ENCODE measurements at regions of chr15 and their contacts with region 1.

Region 1: DNA sequence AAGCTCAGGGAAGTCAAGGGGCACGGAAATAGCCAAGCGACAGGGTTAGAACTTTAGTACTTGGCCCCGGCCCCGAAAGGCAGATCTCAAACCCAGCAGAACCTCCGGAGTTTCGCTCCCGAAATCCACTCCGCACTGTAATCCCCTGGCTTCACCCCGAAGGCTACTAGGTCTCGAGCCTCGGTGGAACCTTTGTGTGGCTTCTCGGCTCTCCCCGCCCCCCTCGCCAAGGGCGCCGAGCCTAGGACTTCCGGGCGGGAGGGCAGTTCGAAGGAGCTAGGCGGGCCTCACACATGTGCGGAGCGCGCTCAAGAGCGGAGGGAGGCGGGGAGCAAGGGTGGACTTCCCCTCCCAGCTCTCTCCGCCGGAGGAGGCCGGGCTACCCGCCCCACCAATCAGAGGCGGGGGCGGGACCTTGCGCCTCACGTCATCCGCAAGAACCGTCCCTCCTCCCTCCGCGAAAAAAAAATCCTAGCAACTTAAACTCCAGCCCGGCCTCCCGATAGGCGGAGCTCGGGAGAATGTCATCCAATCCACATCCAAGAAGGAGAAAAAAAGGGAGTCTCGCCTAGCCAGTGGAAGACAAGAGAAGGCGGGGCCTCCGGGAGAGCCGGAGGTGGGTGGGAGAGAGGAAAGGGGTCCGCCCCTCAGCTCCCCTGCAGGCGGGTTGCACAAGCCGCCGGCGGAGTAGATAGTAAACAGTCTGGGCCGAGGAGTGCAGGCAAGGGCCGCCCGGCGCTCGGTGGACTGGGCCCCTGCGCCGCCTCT is 2.4 kb upstream of the SIN3A start:
- DNase-seq: peak; percentile 93 to 100 (median 95)
- ATAC-seq: peak; percentile 39
- H3K4me3 ChIP-seq: peak overlapping the region; percentile 86 to 96
- H3K4me3 Mint-ChIP-seq: peak overlapping the region; percentile 92
- H3K27ac ChIP-seq: peak overlapping the region; percentile 83 to 92
- H3K27ac Mint-ChIP-seq: peak overlapping the region; percentile 99
- H3K4me1 ChIP-seq: peaks cover 23% of the 10 kb centered on the region
- H3K4me1 Mint-ChIP-seq: peaks cover 37% of the 10 kb centered on the region
- H3K27me3 ChIP-seq: no peaks in the 10 kb centered on the region
- H3K27me3 Mint-ChIP-seq: no peaks in the 10 kb centered on the region
- CTCF ChIP-seq: no peak

Region 2: DNA sequence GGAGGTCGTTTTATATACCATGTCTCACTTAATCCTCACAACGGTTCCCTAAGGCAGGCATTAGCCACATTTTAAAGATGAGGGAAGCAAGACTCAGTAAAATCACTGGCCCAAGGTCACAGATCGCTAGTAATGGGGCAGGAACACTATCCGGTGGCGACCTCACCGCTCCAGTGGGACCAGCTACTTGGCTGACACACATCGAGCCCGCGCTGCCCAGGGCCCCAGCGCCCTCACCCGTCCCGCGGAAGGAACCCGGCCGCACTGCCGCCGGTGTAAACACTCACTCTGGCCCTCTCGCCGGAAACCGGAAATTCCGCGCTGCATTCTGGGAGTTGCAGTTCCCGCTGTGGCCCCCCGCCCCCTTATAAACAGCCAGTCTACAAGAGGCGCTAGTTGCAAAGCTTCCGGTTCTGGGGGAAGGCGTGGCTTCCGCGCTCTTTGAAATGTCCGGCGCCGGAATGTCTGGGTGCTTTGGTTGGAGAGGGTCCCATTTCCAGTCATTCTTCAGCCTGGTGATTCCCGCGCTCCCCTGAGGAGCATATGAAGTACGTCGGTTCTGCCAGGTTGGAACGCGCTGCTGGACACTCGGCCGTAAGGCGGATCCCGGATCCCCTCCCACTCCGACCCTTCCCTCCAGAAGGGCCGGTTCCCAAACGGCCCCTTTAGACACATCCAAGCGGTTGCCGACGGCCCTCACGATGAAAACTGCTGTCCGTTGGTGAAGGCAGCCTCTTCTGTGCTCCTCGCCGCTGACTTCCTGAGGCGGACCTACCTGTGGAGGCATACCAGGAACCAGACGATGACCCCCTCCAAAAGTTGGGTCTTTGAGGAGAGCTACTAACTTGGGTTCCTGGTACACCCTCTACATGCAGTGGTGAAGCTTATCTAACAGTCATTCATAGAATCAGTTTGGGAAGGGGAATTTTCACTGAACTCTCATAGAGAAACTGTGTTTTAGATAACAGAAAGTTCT is 992.7 kb before region 1 on chr15 and contains the start of gene UBL7:
- CTCF ChIA-PET with region 1: no interaction called
- POLR2A ChIA-PET with region 1: no interaction called
- intact Hi-C with region 1: loop called in 1 of 2 experiments (anchors 5 kb)
- DNase-seq: peak; percentile 93 to 99 (median 96)
- ATAC-seq: peak; percentile 98
- H3K4me3 ChIP-seq: peak within 1 kb of the TSS; percentile 74 to 85
- H3K4me3 Mint-ChIP-seq: peak within 1 kb of the TSS; percentile 93
- H3K27ac ChIP-seq: peak within 1 kb of the TSS; percentile 53 to 83
- H3K27ac Mint-ChIP-seq: peak within 1 kb of the TSS; percentile 94
- H3K4me1 ChIP-seq: peaks cover 21% of the 10 kb centered on the region
- H3K4me1 Mint-ChIP-seq: peaks cover 50% of the 10 kb centered on the region
- H3K27me3 ChIP-seq: no peaks in the 10 kb centered on the region
- H3K27me3 Mint-ChIP-seq: no peaks in the 10 kb centered on the region
- CTCF ChIP-seq: no peak
- total RNA-seq, gene UBL7: 21.7 to 23.1 TPM

Region 3: GRCh38 chr15:74653426-74654123 is 800.3 kb before region 1 on chr15:
- CTCF ChIA-PET with region 1: no interaction called
- POLR2A ChIA-PET with region 1: no interaction called
- intact Hi-C with region 1: no loop called
- DNase-seq: no peak
- ATAC-seq: no peak
- H3K4me3 ChIP-seq: no peak overlapping the region
- H3K4me3 Mint-ChIP-seq: no peak overlapping the region
- H3K27ac ChIP-seq: no peak overlapping the region
- H3K27ac Mint-ChIP-seq: no peak overlapping the region
- H3K4me1 ChIP-seq: no peaks in the 10 kb centered on the region
- H3K4me1 Mint-ChIP-seq: peaks cover 26% of the 10 kb centered on the region
- H3K27me3 ChIP-seq: no peaks in the 10 kb centered on the region
- H3K27me3 Mint-ChIP-seq: no peaks in the 10 kb centered on the region
- CTCF ChIP-seq: no peak

Region 4: GRCh38 chr15:74842581-74843444 is 611.1 kb before region 1 on chr15 and contains the start of gene ULK3:
- CTCF ChIA-PET with region 1: no interaction called
- POLR2A ChIA-PET with region 1: no interaction called
- intact Hi-C with region 1: loop called (anchors 2 kb)
- DNase-seq: peak; percentile 88 to 96 (median 92)
- ATAC-seq: peak; percentile 92
- H3K4me3 ChIP-seq: peak within 1 kb of the TSS; percentile 90 to 97
- H3K4me3 Mint-ChIP-seq: peak within 1 kb of the TSS; percentile 91
- H3K27ac ChIP-seq: peak within 1 kb of the TSS; percentile 72 to 78
- H3K27ac Mint-ChIP-seq: peak within 1 kb of the TSS; percentile 93
- H3K4me1 ChIP-seq: peaks cover 43% of the 10 kb centered on the region
- H3K4me1 Mint-ChIP-seq: peaks cover 48% of the 10 kb centered on the region
- H3K27me3 ChIP-seq: no peaks in the 10 kb centered on the region
- H3K27me3 Mint-ChIP-seq: no peaks in the 10 kb centered on the region
- CTCF ChIP-seq: peak; percentile 71
- total RNA-seq, gene ULK3: 34.3 to 35.1 TPM

Region 5: DNA sequence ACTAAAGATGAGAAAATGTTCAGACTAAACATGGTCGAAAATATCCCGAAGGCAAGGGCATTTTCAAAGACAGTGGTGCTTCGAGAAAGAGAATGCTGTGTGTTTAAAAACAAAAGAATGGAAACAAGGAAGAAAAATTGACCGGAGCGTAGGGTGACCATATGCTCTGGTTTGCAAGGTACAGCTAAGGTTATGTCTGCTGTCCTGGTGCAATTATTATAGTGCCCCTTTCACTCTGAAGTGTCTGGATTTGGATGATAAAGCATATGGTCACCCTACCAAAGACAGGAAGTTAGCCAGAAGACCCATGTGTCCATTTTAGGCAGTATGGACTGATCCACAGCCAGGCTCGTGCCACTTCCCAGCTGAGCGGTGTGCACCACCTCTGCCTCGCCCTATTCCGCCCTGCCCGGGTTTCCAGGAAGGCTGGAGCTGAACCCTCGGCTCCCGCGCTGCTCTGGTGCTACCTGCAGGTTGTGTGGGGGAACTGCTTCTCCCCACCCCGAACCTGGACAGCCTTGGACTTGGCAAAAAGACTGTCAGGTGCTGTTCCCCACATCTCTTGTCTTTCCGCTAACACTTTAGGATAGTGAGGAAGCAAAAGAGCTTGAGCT is 146.0 kb before region 1 on chr15:
- CTCF ChIA-PET with region 1: no interaction called
- POLR2A ChIA-PET with region 1: no interaction called
- intact Hi-C with region 1: no loop called
- DNase-seq: no peak
- ATAC-seq: no peak
- H3K4me3 ChIP-seq: no peak overlapping the region
- H3K4me3 Mint-ChIP-seq: no peak overlapping the region
- H3K27ac ChIP-seq: no peak overlapping the region
- H3K27ac Mint-ChIP-seq: no peak overlapping the region
- H3K4me1 ChIP-seq: no peaks in the 10 kb centered on the region
- H3K4me1 Mint-ChIP-seq: no peaks in the 10 kb centered on the region
- H3K27me3 ChIP-seq: no peaks in the 10 kb centered on the region
- H3K27me3 Mint-ChIP-seq: peaks cover 17% of the 10 kb centered on the region
- CTCF ChIP-seq: peak; percentile 14

Region 6: GRCh38 chr15:75367913-75368688 is 85.8 kb before region 1 on chr15 and contains the start of gene MAN2C1:
- CTCF ChIA-PET with region 1: interaction called, 20 read pairs
- POLR2A ChIA-PET with region 1: interaction called, 76 read pairs
- intact Hi-C with region 1: loop called (anchors 1 kb)
- DNase-seq: peak; percentile 76 to 97 (median 91)
- ATAC-seq: peak; percentile 97
- H3K4me3 ChIP-seq: peak within 1 kb of the TSS; percentile 86 to 97
- H3K4me3 Mint-ChIP-seq: peak within 1 kb of the TSS; percentile 91
- H3K27ac ChIP-seq: peak within 1 kb of the TSS; percentile 89 to 96
- H3K27ac Mint-ChIP-seq: peak within 1 kb of the TSS; percentile 94
- H3K4me1 ChIP-seq: peaks cover 15% of the 10 kb centered on the region
- H3K4me1 Mint-ChIP-seq: peaks cover 24% of the 10 kb centered on the region
- H3K27me3 ChIP-seq: no peaks in the 10 kb centered on the region
- H3K27me3 Mint-ChIP-seq: no peaks in the 10 kb centered on the region
- CTCF ChIP-seq: no peak
- total RNA-seq, gene MAN2C1: 342 to 373 TPM

Region 7: GRCh38 chr15:75389791-75390382 is 64.0 kb before region 1 on chr15:
- CTCF ChIA-PET with region 1: no interaction called
- POLR2A ChIA-PET with region 1: no interaction called
- intact Hi-C with region 1: no loop called
- DNase-seq: no peak
- ATAC-seq: no peak
- H3K4me3 ChIP-seq: no peak overlapping the region
- H3K4me3 Mint-ChIP-seq: no peak overlapping the region
- H3K27ac ChIP-seq: no peak overlapping the region
- H3K27ac Mint-ChIP-seq: no peak overlapping the region
- H3K4me1 ChIP-seq: no peaks in the 10 kb centered on the region
- H3K4me1 Mint-ChIP-seq: peaks cover 14% of the 10 kb centered on the region
- H3K27me3 ChIP-seq: no peaks in the 10 kb centered on the region
- H3K27me3 Mint-ChIP-seq: no peaks in the 10 kb centered on the region
- CTCF ChIP-seq: no peak

Region 8: GRCh38 chr15:75639709-75640482 is 186.0 kb after region 1 on chr15 and contains the start of gene IMP3:
- CTCF ChIA-PET with region 1: interaction called, 13 read pairs
- POLR2A ChIA-PET with region 1: interaction called, 140 read pairs
- intact Hi-C with region 1: loop called (anchors 1 kb)
- DNase-seq: peak; percentile 81 to 98 (median 94)
- ATAC-seq: peak; percentile 90
- H3K4me3 ChIP-seq: peak within 1 kb of the TSS; percentile 80 to 99
- H3K4me3 Mint-ChIP-seq: peak within 1 kb of the TSS; percentile 91
- H3K27ac ChIP-seq: peak within 1 kb of the TSS; percentile 79 to 98
- H3K27ac Mint-ChIP-seq: peak within 1 kb of the TSS; percentile 97
- H3K4me1 ChIP-seq: peaks cover 31% of the 10 kb centered on the region
- H3K4me1 Mint-ChIP-seq: peaks cover 41% of the 10 kb centered on the region
- H3K27me3 ChIP-seq: no peaks in the 10 kb centered on the region
- H3K27me3 Mint-ChIP-seq: no peaks in the 10 kb centered on the region
- CTCF ChIP-seq: no peak
- total RNA-seq, gene IMP3: 67.1 to 69.5 TPM

Region 9: DNA sequence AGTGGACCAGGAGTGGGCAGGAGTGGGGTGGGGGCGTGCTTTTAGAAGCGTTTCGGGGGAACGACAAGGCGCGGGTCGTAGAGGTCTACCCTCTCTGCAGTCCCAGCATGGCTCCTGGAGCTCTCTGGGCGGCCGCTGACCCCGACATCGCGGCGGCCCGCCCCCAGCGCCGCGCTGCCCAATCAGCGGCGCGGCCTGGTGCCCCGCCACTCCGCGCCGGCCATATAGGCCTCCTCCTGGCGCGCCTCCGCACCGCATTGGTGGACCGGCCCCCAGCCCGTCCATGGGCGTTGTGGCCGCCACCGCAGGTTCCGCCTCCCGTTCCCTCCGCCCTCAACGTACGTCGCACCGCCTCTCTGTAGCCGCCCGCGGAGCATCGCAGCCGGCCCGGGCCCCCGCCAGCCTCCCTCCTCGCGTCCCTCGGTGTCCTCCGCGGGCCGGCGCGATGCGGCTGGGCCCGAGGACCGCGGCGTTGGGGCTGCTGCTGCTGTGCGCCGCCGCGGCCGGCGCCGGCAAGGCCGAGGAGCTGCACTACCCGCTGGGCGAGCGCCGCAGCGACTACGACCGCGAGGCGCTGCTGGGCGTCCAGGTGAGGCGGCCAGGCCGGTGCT is 1477.6 kb after region 1 on chr15 and contains the start of gene RCN2:
- CTCF ChIA-PET with region 1: no interaction called
- POLR2A ChIA-PET with region 1: no interaction called
- intact Hi-C with region 1: loop called in 1 of 2 experiments (anchors 5 kb)
- DNase-seq: peak; percentile 81 to 96 (median 93)
- ATAC-seq: peak; percentile 97
- H3K4me3 ChIP-seq: peak within 1 kb of the TSS; percentile 62 to 63
- H3K4me3 Mint-ChIP-seq: peak within 1 kb of the TSS; percentile 90
- H3K27ac ChIP-seq: peak within 1 kb of the TSS; percentile 63 to 65
- H3K27ac Mint-ChIP-seq: peak within 1 kb of the TSS; percentile 91
- H3K4me1 ChIP-seq: peaks cover 24% of the 10 kb centered on the region
- H3K4me1 Mint-ChIP-seq: peaks cover 34% of the 10 kb centered on the region
- H3K27me3 ChIP-seq: no peaks in the 10 kb centered on the region
- H3K27me3 Mint-ChIP-seq: no peaks in the 10 kb centered on the region
- CTCF ChIP-seq: no peak
- total RNA-seq, gene RCN2: 25.9 to 29.7 TPM

Measured in CD8-positive, alpha-beta T cell (primary cell).